CD4-positive, alpha-beta memory T cell (primary cell): ENCODE measurements at regions of chr1 and their contacts with region 1.

Region 1: GRCh38 chr1:185670187-185670627 is 64.0 kb upstream of the HMCN1 start:
- DNase-seq: peak; percentile 44 to 59 (median 57)
- H3K4me3 ChIP-seq: no peak overlapping the region
- H3K4me3 Mint-ChIP-seq: no peak overlapping the region
- H3K27ac ChIP-seq: no peak overlapping the region
- H3K27ac Mint-ChIP-seq: peak overlapping the region in 3 of 7 donors; percentile 3 to 31 (median 21)
- H3K4me1 ChIP-seq: peaks cover 14% of the 10 kb centered on the region
- H3K4me1 Mint-ChIP-seq: peaks cover 14 to 28% (median 20%) of the 10 kb centered on the region in 4 donors
- H3K27me3 ChIP-seq: no peaks in the 10 kb centered on the region
- H3K27me3 Mint-ChIP-seq: no peaks in the 10 kb centered on the region

Region 2: GRCh38 chr1:185238447-185238846 is 431.8 kb before region 1 on chr1:
- CTCF ChIA-PET with region 1: interaction called, 79 read pairs
- POLR2A ChIA-PET with region 1: interaction called, 8 read pairs
- intact Hi-C with region 1: loop called (anchors 1 kb)
- DNase-seq: peak in 4 of 5 donors; percentile 29 to 44 (median 35)
- H3K4me3 ChIP-seq: no peak overlapping the region
- H3K4me3 Mint-ChIP-seq: peak overlapping the region in 4 of 8 donors; percentile 4 to 60 (median 32)
- H3K27ac ChIP-seq: no peak overlapping the region
- H3K27ac Mint-ChIP-seq: peak overlapping the region in 2 of 7 donors; percentile 23 to 70
- H3K4me1 ChIP-seq: peaks cover 25% of the 10 kb centered on the region
- H3K4me1 Mint-ChIP-seq: peaks cover 17 to 35% (median 27%) of the 10 kb centered on the region in 4 donors
- H3K27me3 ChIP-seq: no peaks in the 10 kb centered on the region
- H3K27me3 Mint-ChIP-seq: no peaks in the 10 kb centered on the region

Region 3: GRCh38 chr1:185420588-185421081 is 249.6 kb before region 1 on chr1:
- CTCF ChIA-PET with region 1: no interaction called
- POLR2A ChIA-PET with region 1: no interaction called
- intact Hi-C with region 1: no loop called
- DNase-seq: peak; percentile 32 to 70 (median 42)
- H3K4me3 ChIP-seq: no peak overlapping the region
- H3K4me3 Mint-ChIP-seq: peak overlapping the region in 6 of 8 donors; percentile 14 to 44 (median 36)
- H3K27ac ChIP-seq: no peak overlapping the region
- H3K27ac Mint-ChIP-seq: peak overlapping the region in 5 of 7 donors; percentile 19 to 85 (median 81)
- H3K4me1 ChIP-seq: peaks cover 20% of the 10 kb centered on the region
- H3K4me1 Mint-ChIP-seq: peaks cover 10 to 19% (median 13%) of the 10 kb centered on the region in 4 donors
- H3K27me3 ChIP-seq: no peaks in the 10 kb centered on the region
- H3K27me3 Mint-ChIP-seq: no peaks in the 10 kb centered on the region

Region 4: GRCh38 chr1:185566995-185567394 is 103.2 kb before region 1 on chr1:
- CTCF ChIA-PET with region 1: interaction called, 19 read pairs
- POLR2A ChIA-PET with region 1: interaction called, 7 read pairs
- intact Hi-C with region 1: loop called (anchors 2 kb)
- DNase-seq: peak; percentile 85 to 94 (median 91)
- H3K4me3 ChIP-seq: peak overlapping the region in 1 of 2 donors; percentile 21
- H3K4me3 Mint-ChIP-seq: peak overlapping the region; percentile 26 to 87 (median 75)
- H3K27ac ChIP-seq: peak overlapping the region; percentile 80
- H3K27ac Mint-ChIP-seq: peak overlapping the region; percentile 94 to 100 (median 99)
- H3K4me1 ChIP-seq: peaks cover 81% of the 10 kb centered on the region
- H3K4me1 Mint-ChIP-seq: peaks cover 62 to 91% (median 75%) of the 10 kb centered on the region in 4 donors
- H3K27me3 ChIP-seq: no peaks in the 10 kb centered on the region
- H3K27me3 Mint-ChIP-seq: no peaks in the 10 kb centered on the region

Region 5: GRCh38 chr1:185681034-185681633 is 10.9 kb after region 1 on chr1:
- CTCF ChIA-PET with region 1: interaction called, 50 read pairs
- POLR2A ChIA-PET with region 1: interaction called, 3 read pairs
- intact Hi-C with region 1: no loop called
- DNase-seq: peak in 4 of 5 donors; percentile 36 to 43 (median 38)
- H3K4me3 ChIP-seq: no peak overlapping the region
- H3K4me3 Mint-ChIP-seq: peak overlapping the region in 1 of 8 donors; percentile 34
- H3K27ac ChIP-seq: no peak overlapping the region
- H3K27ac Mint-ChIP-seq: no peak overlapping the region
- H3K4me1 ChIP-seq: peaks cover 26% of the 10 kb centered on the region
- H3K4me1 Mint-ChIP-seq: peaks cover 19 to 32% (median 26%) of the 10 kb centered on the region in 4 donors
- H3K27me3 ChIP-seq: no peaks in the 10 kb centered on the region
- H3K27me3 Mint-ChIP-seq: no peaks in the 10 kb centered on the region

Region 6: DNA sequence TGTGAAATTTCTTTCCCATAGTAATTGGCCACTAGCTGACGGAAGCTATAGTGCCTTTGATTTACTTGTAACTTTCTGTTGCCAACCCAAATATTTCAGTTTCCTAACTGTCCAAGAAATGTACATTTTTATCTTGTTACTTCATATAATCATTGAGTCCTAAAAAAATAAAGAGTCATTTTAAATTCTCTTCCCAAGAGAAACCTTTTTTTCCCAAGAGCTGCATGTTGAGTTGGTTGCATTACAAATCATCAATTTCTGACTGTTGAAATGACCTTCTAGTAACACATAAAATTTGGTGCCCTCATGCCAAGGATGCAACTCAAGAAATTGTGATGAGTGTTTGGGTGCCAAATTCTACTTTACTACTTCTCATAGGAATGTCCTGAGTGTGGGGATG is 125.0 kb after region 1 on chr1:
- CTCF ChIA-PET with region 1: no interaction called
- POLR2A ChIA-PET with region 1: no interaction called
- intact Hi-C with region 1: no loop called
- DNase-seq: no peak
- H3K4me3 ChIP-seq: no peak overlapping the region
- H3K4me3 Mint-ChIP-seq: no peak overlapping the region
- H3K27ac ChIP-seq: no peak overlapping the region
- H3K27ac Mint-ChIP-seq: no peak overlapping the region
- H3K4me1 ChIP-seq: no peaks in the 10 kb centered on the region
- H3K4me1 Mint-ChIP-seq: no peaks in the 10 kb centered on the region
- H3K27me3 ChIP-seq: no peaks in the 10 kb centered on the region
- H3K27me3 Mint-ChIP-seq: peaks cover 3 to 9% of the 10 kb centered on the region in 2 donors